ENCODE measurements at regions of chr22 and their contacts with region 1.

Region 1: DNA sequence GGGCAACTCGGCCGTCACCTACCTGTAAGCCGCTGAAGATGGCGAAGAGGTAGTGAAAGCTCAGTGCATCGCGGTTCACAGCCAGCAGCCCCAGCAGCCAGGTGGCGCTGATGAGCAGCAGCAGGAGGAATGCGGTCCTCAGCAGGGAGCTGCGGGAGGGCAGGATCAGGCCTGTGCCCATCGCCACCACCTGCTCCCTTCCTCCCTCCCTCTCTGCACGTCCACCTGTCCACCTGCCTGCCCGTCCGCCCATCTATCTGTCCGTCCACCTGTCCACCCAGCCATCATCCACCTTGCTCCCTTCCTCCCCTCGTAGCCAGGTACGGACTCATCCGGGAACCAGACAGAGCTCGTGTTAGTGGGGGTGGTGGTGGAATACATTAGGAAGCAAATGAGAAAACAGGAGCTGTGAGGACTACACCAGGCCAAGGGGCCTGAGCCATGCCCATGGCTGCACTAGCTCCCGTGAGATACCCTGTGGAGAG is 32.2 kb downstream of the TRMU start:
- DNase-seq: peak; percentile 50
- H3K4me3 ChIP-seq: no peak overlapping the region
- H3K27ac ChIP-seq: no peak overlapping the region
- H3K4me1 ChIP-seq: no peaks in the 10 kb centered on the region
- H3K27me3 ChIP-seq: peaks cover 30% of the 10 kb centered on the region
- CTCF ChIP-seq: peak; percentile 87

Region 2: GRCh38 chr22:46196278-46196677 is 171.5 kb before region 1 on chr22:
- intact Hi-C with region 1: no loop called
- DNase-seq: peak; percentile 79
- H3K4me3 ChIP-seq: no peak overlapping the region
- H3K27ac ChIP-seq: peak overlapping the region; percentile 90
- H3K4me1 ChIP-seq: peaks cover 51% of the 10 kb centered on the region
- H3K27me3 ChIP-seq: no peaks in the 10 kb centered on the region
- CTCF ChIP-seq: no peak

Region 3: GRCh38 chr22:46250035-46250782 is 117.5 kb before region 1 on chr22 and contains the start of gene CDPF1:
- intact Hi-C with region 1: no loop called
- DNase-seq: peak; percentile 95
- H3K4me3 ChIP-seq: peak within 1 kb of the TSS; percentile 93
- H3K27ac ChIP-seq: peak within 1 kb of the TSS; percentile 96
- H3K4me1 ChIP-seq: peaks cover 70% of the 10 kb centered on the region
- H3K27me3 ChIP-seq: no peaks in the 10 kb centered on the region
- CTCF ChIP-seq: peak; percentile 10
- total RNA-seq, gene CDPF1: 6.4 TPM

Region 4: DNA sequence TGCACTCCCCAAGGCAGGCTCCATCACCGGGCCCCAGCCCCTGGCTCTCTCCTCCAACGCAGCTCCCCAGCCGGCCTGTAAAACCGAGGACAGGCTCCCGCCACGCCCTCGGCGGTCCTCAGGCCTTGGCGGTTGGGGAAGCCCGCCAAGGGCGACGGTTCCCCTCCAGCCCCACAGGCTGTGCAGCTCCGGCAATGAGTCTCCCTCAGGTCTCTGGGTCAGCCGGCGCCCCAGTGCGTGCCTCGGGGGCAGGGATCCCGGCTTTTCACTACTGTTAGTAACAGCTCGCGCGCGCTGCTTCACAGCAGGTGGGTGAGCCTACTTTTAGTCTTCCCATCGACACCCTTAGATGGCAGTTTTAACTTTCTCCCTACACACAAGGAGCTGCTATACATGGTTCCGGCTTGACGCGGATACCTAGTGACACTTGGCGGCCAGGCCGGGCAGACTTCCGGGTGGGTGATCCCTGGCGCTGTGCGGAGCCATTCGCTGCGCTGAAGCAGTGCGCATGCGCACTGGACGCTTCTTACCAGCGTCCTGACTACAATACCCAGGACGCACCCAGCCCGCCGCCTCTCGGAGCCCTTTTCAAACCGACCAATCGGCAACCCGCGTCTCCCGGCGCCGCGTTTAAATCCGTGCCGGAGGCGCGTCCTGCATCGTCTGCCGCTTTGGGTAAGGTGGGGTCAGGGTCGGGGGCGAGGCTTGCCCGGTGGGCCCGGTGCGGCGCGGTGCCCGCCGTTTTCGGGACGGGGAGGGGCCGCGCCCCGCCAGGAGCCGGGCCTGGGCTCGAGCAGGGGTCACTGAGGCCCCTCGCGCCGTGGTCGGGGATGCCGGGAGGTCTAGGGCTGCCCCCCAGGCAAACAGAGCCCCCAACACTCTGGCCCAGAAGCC is 71.2 kb before region 1 on chr22 and contains the start of gene GTSE1:
- intact Hi-C with region 1: no loop called
- DNase-seq: peak; percentile 98
- H3K4me3 ChIP-seq: peak within 1 kb of the TSS; percentile 71
- H3K27ac ChIP-seq: peak within 1 kb of the TSS; percentile 93
- H3K4me1 ChIP-seq: peaks cover 25% of the 10 kb centered on the region
- H3K27me3 ChIP-seq: no peaks in the 10 kb centered on the region
- CTCF ChIP-seq: peak; percentile 43
- total RNA-seq, gene GTSE1: 0.25 TPM

Region 5: DNA sequence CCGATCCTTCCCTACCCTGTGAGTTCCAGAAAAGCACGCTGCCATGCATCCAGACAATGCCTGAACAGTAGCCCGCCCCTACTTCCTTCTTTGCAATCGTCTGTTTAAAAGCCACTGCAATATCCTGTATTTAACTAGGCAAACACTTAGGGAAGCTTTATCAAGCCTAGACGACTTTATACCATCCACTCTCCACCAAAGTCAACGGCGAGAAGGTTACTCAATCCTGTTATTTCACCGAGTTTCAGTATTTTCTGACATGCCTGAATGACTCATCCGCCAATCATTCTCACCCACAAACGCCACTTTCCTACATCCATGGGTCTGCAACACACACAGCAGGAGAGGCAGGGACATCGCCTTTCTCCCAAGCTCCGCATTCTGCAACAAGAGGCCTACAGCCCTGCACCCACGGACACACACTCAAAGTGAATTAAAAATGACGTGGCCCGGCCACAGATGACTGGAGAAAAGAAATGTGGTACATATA is 160.4 kb after region 1 on chr22:
- intact Hi-C with region 1: no loop called
- DNase-seq: no peak
- H3K4me3 ChIP-seq: no peak overlapping the region
- H3K27ac ChIP-seq: no peak overlapping the region
- H3K4me1 ChIP-seq: peaks cover 10% of the 10 kb centered on the region
- H3K27me3 ChIP-seq: peaks cover 40% of the 10 kb centered on the region
- CTCF ChIP-seq: no peak

Region 6: GRCh38 chr22:46542011-46542985 is 174.5 kb after region 1 on chr22:
- intact Hi-C with region 1: loop called (anchors 10 kb)
- DNase-seq: peak; percentile 70
- H3K4me3 ChIP-seq: no peak overlapping the region
- H3K27ac ChIP-seq: peak overlapping the region; percentile 30
- H3K4me1 ChIP-seq: peaks cover 48% of the 10 kb centered on the region
- H3K27me3 ChIP-seq: peaks cover 54% of the 10 kb centered on the region
- CTCF ChIP-seq: peak; percentile 93